ENCODE measurements at regions of chr9 and their contacts with region 1.

Region 1: DNA sequence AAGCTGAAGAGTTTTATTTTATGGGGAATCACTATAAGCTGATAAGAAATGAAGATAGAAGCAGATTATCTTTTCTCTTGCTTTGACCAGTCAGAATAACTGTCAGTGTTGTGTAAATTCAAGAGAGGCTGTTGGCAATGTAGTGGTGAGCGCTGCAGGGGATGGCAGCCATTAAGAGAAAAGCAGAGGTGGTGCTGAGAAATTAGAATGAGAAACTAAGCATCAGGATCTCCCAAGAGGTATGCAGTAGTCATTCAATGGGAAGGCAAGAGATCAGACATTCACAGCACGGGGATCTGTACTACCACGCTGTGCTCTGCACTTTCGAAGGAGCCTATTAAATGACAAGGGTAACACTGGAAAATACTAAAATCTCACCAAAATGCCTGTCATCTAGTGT is 768.5 kb upstream of the ACO1 start:
- DNase-seq: no peak
- H3K4me3 ChIP-seq: no peak overlapping the region
- CTCF ChIP-seq: no peak

Region 2: GRCh38 chr9:31535651-31536050 is 80.3 kb before region 1 on chr9:
- in situ Hi-C with region 1: no loop called
- DNase-seq: no peak
- H3K4me3 ChIP-seq: no peak overlapping the region
- CTCF ChIP-seq: no peak

Region 3: DNA sequence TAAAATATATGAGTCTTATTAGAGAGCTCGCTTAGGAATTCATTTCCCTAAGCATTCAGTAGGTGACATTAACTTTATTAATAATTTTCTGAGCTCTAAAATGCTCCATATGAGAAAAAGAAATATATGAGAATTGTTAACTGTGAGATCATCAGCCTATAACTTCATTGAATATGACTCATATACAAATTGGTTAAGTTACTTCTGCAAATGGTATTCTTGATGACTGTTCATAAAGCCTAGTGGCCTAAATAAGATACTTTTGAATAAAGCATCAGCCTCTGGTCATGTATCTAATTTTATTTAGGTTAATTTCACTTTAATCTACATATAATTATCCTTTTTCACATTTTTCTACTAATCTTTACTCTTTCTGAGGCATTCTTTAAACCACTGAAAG is 58.3 kb after region 1 on chr9:
- in situ Hi-C with region 1: loop called (anchors 5 kb)
- DNase-seq: no peak
- H3K4me3 ChIP-seq: no peak overlapping the region
- CTCF ChIP-seq: no peak

Measured in astrocyte of the cerebellum (primary cell).